GM10248 (cell line): ENCODE measurements at regions of chr7 and their contacts with region 1.

Region 1: GRCh38 chr7:47818796-47819606 is 129.3 kb downstream of the PKD1L1 start:
- DNase-seq: peak; percentile 69
- CTCF ChIP-seq: peak; percentile 99

Region 2: GRCh38 chr7:47444379-47445057 is 374.5 kb before region 1 on chr7:
- CTCF ChIA-PET with region 1: interaction called, 24 read pairs
- POLR2A ChIA-PET with region 1: no interaction called
- DNase-seq: peak; percentile 46
- CTCF ChIP-seq: peak; percentile 51

Region 3: DNA sequence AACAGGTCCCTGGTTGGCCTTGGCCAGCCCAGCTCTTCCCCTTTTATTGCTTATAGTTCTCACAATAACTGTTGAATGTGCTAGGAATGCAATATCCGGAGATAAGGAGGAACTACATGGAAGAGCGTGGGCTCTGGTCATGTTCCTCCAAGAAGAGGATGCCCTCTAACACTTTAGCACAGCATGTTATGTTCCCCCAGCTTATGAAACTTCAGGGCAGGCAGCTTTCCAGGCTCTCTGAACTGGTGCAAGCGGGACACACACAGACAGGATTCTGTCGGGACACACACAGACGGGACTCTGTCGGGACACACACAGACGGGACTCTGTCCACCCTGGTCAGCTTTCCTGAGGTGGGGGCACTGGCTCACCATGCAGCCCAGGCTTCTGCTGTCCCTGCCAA is 12.3 kb before region 1 on chr7:
- CTCF ChIA-PET with region 1: interaction called, 25 read pairs
- POLR2A ChIA-PET with region 1: no interaction called
- DNase-seq: no peak
- CTCF ChIP-seq: no peak

Region 4: GRCh38 chr7:47833211-47833610 is 14.2 kb after region 1 on chr7:
- CTCF ChIA-PET with region 1: interaction called, 19 read pairs
- POLR2A ChIA-PET with region 1: no interaction called
- DNase-seq: no peak
- CTCF ChIP-seq: no peak